ENCODE measurements at regions of chr3 and their contacts with region 1.

Region 1: GRCh38 chr3:7504886-7505775 is 644.2 kb downstream of the GRM7 start:
- DNase-seq: peak; percentile 99
- H3K4me3 ChIP-seq: no peak overlapping the region
- H3K27ac ChIP-seq: peak overlapping the region; percentile 98
- H3K4me1 ChIP-seq: peaks cover 34% of the 10 kb centered on the region
- H3K27me3 ChIP-seq: no peaks in the 10 kb centered on the region
- CTCF ChIP-seq: peak in 1 of 2 donors; percentile 29
- POLR2A ChIP-seq: no peak

Region 2: GRCh38 chr3:6449099-6449498 is 1056.0 kb before region 1 on chr3:
- CTCF ChIA-PET with region 1: no interaction called
- POLR2A ChIA-PET with region 1: no interaction called
- dilution Hi-C with region 1: no loop called
- intact Hi-C with region 1: loop called (anchors 1 kb)
- DNase-seq: peak; percentile 87
- H3K4me3 ChIP-seq: no peak overlapping the region
- H3K27ac ChIP-seq: peak overlapping the region; percentile 76
- H3K4me1 ChIP-seq: peaks cover 40% of the 10 kb centered on the region
- H3K27me3 ChIP-seq: no peaks in the 10 kb centered on the region
- CTCF ChIP-seq: no peak
- POLR2A ChIP-seq: no peak

Region 3: GRCh38 chr3:6585360-6585759 is 919.8 kb before region 1 on chr3:
- CTCF ChIA-PET with region 1: no interaction called
- POLR2A ChIA-PET with region 1: no interaction called
- dilution Hi-C with region 1: no loop called
- intact Hi-C with region 1: no loop called
- DNase-seq: no peak
- H3K4me3 ChIP-seq: no peak overlapping the region
- H3K27ac ChIP-seq: no peak overlapping the region
- H3K4me1 ChIP-seq: no peaks in the 10 kb centered on the region
- H3K27me3 ChIP-seq: no peaks in the 10 kb centered on the region
- CTCF ChIP-seq: no peak
- POLR2A ChIP-seq: no peak

Region 4: DNA sequence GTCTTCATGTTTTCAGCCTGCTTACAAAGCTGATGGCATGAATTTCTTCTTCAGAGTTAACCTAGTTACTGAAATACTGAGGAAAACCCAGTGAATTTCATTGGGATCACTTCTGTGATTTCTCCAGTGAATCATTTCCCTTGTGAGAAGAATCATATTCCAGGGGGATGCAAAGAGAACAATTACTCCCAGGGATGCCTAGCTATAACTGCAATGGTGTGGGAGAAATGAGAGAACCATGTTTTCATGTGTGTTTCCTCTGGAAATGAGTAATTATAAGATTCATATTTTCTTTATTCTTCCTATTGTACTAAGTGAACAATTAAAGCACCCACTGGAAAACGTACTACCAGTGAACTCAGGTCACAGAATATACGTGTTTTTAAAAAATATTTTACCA is 158.8 kb before region 1 on chr3:
- CTCF ChIA-PET with region 1: interaction called, 6 read pairs
- POLR2A ChIA-PET with region 1: no interaction called
- dilution Hi-C with region 1: no loop called
- intact Hi-C with region 1: loop called (anchors 1 kb)
- DNase-seq: peak; percentile 97
- H3K4me3 ChIP-seq: peak overlapping the region in 1 of 3 experiments; percentile 6
- H3K27ac ChIP-seq: peak overlapping the region; percentile 97
- H3K4me1 ChIP-seq: peaks cover 24% of the 10 kb centered on the region
- H3K27me3 ChIP-seq: no peaks in the 10 kb centered on the region
- CTCF ChIP-seq: no peak
- POLR2A ChIP-seq: peak; percentile 19

Region 5: DNA sequence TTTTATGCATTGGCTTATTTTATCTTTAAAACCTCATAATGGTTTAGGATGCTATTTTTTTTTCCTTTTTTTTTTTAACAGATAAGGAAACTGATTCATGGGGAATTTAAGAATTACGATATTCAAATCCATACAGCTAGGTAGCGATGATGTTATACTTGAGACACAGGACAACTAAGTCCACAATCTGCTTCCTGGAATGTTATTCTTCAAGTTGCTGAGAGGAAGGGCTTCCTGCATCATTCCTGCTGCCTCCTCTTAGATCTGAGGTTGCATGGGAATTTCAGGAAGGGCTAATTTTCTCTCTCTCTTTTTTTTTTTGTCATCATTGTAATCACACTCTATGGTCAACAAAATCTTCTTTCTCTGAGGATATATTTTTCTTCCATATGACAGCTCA is 48.7 kb before region 1 on chr3:
- CTCF ChIA-PET with region 1: no interaction called
- POLR2A ChIA-PET with region 1: no interaction called
- dilution Hi-C with region 1: no loop called
- intact Hi-C with region 1: loop called (anchors 1 kb)
- DNase-seq: peak; percentile 69
- H3K4me3 ChIP-seq: no peak overlapping the region
- H3K27ac ChIP-seq: peak overlapping the region; percentile 23
- H3K4me1 ChIP-seq: peaks cover 12% of the 10 kb centered on the region
- H3K27me3 ChIP-seq: no peaks in the 10 kb centered on the region
- CTCF ChIP-seq: no peak
- POLR2A ChIP-seq: no peak

Region 6: GRCh38 chr3:7630925-7631324 is 125.8 kb after region 1 on chr3:
- CTCF ChIA-PET with region 1: no interaction called
- POLR2A ChIA-PET with region 1: no interaction called
- dilution Hi-C with region 1: no loop called
- intact Hi-C with region 1: loop called (anchors 2 kb)
- DNase-seq: peak; percentile 75
- H3K4me3 ChIP-seq: no peak overlapping the region
- H3K27ac ChIP-seq: peak overlapping the region; percentile 23
- H3K4me1 ChIP-seq: peaks cover 13% of the 10 kb centered on the region
- H3K27me3 ChIP-seq: no peaks in the 10 kb centered on the region
- CTCF ChIP-seq: peak in 1 of 2 donors; percentile 36
- POLR2A ChIP-seq: no peak

Region 7: DNA sequence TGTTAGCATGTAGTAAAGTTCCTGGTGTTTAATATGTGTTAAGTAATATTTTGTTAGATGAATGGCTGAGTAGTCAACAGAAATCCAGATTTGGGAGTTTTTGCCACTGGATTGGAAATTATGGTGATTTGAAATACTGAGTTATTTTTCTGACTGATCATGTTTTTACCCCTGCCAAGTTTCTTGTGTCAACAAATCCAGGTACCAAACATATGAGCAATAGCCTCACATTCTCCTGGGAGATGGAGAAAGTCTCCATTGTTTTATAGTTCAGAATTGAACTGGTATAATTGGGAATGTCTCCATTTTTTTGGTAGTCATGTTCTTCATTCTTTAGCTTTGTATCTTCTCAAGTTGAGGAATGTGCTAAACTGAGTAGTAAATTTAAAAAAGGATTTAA is 229.3 kb after region 1 on chr3:
- CTCF ChIA-PET with region 1: no interaction called
- POLR2A ChIA-PET with region 1: no interaction called
- dilution Hi-C with region 1: no loop called
- intact Hi-C with region 1: loop called (anchors 1 kb)
- DNase-seq: peak; percentile 71
- H3K4me3 ChIP-seq: no peak overlapping the region
- H3K27ac ChIP-seq: peak overlapping the region; percentile 85
- H3K4me1 ChIP-seq: peaks cover 33% of the 10 kb centered on the region
- H3K27me3 ChIP-seq: no peaks in the 10 kb centered on the region
- CTCF ChIP-seq: no peak
- POLR2A ChIP-seq: no peak

Region 8: GRCh38 chr3:8220291-8220690 is 715.2 kb after region 1 on chr3:
- CTCF ChIA-PET with region 1: no interaction called
- POLR2A ChIA-PET with region 1: no interaction called
- dilution Hi-C with region 1: no loop called
- intact Hi-C with region 1: no loop called
- DNase-seq: no peak
- H3K4me3 ChIP-seq: no peak overlapping the region
- H3K27ac ChIP-seq: no peak overlapping the region
- H3K4me1 ChIP-seq: no peaks in the 10 kb centered on the region
- H3K27me3 ChIP-seq: no peaks in the 10 kb centered on the region
- CTCF ChIP-seq: no peak
- POLR2A ChIP-seq: no peak

Measured in endothelial cell of umbilical vein (primary cell).